Heart right ventricle (tissue), 16 donors: ENCODE measurements at regions of chr17 and their contacts with region 1.

Region 1: GRCh38 chr17:9389110-9389509 is 186.5 kb downstream of the STX8 start:
- DNase-seq: no peak
- ATAC-seq: no peak
- H3K4me3 ChIP-seq: no peak overlapping the region
- H3K27ac ChIP-seq: no peak overlapping the region
- H3K4me1 ChIP-seq: peaks cover 0 to 7% (median 0%) of the 10 kb centered on the region in 9 donors
- H3K27me3 ChIP-seq: no peaks in the 10 kb centered on the region
- CTCF ChIP-seq: no peak

Region 2: GRCh38 chr17:8997994-8998628 is 391.0 kb before region 1 on chr17:
- intact Hi-C with region 1: loop called in 1 of 10 experiments (anchors 5 kb)
- DNase-seq: peak in 1 of 2 donors; percentile 62
- ATAC-seq: peak in 5 of 8 donors; percentile 52 to 65 (median 59)
- H3K4me3 ChIP-seq: no peak overlapping the region
- H3K27ac ChIP-seq: no peak overlapping the region
- H3K4me1 ChIP-seq: peaks cover 0 to 10% (median 5%) of the 10 kb centered on the region in 9 donors
- H3K27me3 ChIP-seq: peaks cover 0 to 47% (median 16%) of the 10 kb centered on the region in 7 donors
- CTCF ChIP-seq: peak; percentile 62 to 97 (median 78)

Region 3: DNA sequence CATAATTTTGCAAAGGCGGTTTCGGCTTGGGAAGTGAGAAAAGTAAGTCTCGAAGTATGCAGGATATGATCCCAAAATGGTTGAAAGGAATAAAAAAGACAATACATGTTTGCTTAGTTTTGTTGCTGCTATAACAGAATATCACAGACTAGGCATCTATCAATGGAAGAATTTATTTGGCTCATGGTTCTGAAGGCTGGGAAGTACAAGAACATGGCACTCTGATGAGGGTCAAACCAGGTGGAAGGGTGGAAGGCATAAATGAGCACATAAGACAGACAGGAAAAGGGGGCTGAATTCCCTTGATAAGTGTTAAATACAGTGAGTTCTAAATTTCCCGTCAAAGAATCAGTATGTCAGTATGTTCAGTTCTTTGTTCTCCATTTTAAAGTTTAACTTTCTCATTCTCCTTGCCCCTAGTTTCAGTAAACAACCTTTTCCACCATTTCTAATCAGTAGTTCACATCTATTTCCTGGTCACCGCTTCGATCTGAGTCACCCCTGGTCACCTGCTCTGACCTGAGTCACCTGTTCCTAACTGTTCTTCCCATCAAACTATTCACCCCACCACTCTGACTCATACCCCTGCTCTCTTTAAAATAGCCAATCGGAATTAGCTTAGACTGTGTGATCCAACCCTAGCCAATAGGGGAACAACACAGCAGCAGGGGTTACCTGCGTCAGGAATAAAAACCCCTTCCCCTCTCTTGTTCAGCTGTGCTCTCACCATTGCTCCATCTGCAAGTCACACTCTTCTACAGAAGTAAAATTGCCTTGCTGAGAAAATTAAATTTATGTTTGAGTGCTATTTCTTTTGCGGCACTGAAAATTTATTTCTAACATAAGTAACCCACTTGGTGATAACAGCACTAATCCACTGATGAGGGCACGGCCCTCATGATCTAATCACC is 54.3 kb before region 1 on chr17:
- intact Hi-C with region 1: loop called in 1 of 10 experiments (anchors 5 kb)
- DNase-seq: no peak
- ATAC-seq: no peak
- H3K4me3 ChIP-seq: no peak overlapping the region
- H3K27ac ChIP-seq: no peak overlapping the region
- H3K4me1 ChIP-seq: no peaks in the 10 kb centered on the region
- H3K27me3 ChIP-seq: no peaks in the 10 kb centered on the region
- CTCF ChIP-seq: no peak

Region 4: DNA sequence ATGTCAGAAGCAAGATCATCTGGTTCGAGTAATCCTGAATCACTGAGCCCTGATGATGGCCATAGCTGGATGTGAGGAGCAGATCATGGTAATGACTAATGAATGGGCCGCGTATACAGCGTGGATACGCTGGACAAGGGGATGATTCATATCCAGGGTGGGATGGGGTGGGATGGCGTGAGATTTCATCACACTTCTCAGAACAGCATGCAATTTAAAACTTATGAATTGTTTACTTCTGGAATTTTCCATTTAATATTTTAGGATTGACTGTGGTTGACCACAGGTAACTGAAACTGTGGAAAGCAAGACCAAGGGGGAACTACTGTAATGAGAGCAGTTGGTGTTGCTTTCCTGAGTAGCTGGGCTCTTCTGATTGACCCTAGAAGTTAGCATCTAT is 39.0 kb before region 1 on chr17:
- intact Hi-C with region 1: loop called in 1 of 10 experiments (anchors 2 kb)
- DNase-seq: no peak
- ATAC-seq: no peak
- H3K4me3 ChIP-seq: no peak overlapping the region
- H3K27ac ChIP-seq: no peak overlapping the region
- H3K4me1 ChIP-seq: no peaks in the 10 kb centered on the region
- H3K27me3 ChIP-seq: no peaks in the 10 kb centered on the region
- CTCF ChIP-seq: no peak